Left lung (tissue), 14 donors: ENCODE measurements at regions of chr15 and their contacts with region 1.

Region 1: DNA sequence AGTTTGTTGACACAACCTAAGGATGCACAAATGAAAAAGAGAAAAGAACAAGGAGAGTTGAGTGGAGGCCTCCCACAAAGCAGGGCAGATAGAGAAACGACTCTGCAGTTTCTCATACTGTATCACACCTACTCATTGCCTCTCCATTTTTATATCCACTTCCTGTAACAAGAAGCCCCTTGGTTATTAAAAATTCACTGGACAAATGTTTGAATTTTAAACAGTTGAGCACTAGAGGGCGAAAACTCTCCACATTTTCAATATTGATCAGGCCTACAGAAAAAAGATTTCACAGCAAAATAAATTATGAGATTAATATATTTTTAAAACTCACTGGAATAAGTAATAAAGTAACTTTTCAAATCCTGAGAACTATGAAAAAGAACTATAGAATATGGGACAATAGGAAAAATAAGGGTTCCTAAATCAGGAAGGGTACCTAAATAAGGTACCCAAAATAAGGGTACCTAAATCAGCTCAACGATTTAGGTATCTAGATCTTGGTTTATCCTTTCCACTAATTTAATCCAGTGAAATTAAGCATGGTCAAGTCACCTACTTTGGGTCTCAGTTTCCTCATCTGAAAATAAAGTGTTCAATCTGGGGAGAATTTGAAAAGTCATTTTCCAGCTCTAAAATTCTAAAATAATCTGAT is 47.0 kb upstream of the PPIB start:
- DNase-seq: peak in 2 of 4 donors; percentile 20 to 49
- ATAC-seq: peak; percentile 49
- H3K4me3 ChIP-seq: no peak overlapping the region
- H3K27ac ChIP-seq: no peak overlapping the region
- H3K4me1 ChIP-seq: no peaks in the 10 kb centered on the region
- H3K27me3 ChIP-seq: no peaks in the 10 kb centered on the region
- CTCF ChIP-seq: no peak

Region 2: GRCh38 chr15:64274341-64274950 is 64.6 kb after region 1 on chr15:
- intact Hi-C with region 1: no loop called
- DNase-seq: no peak
- ATAC-seq: no peak
- H3K4me3 ChIP-seq: no peak overlapping the region
- H3K27ac ChIP-seq: peak overlapping the region in 1 of 2 donors; percentile 48
- H3K4me1 ChIP-seq: peaks cover 0 to 9% of the 10 kb centered on the region in 2 donors
- H3K27me3 ChIP-seq: no peaks in the 10 kb centered on the region
- CTCF ChIP-seq: no peak

Region 3: GRCh38 chr15:64324165-64324877 is 114.5 kb after region 1 on chr15:
- intact Hi-C with region 1: no loop called
- DNase-seq: no peak
- ATAC-seq: no peak
- H3K4me3 ChIP-seq: no peak overlapping the region
- H3K27ac ChIP-seq: no peak overlapping the region
- H3K4me1 ChIP-seq: no peaks in the 10 kb centered on the region
- H3K27me3 ChIP-seq: no peaks in the 10 kb centered on the region
- CTCF ChIP-seq: no peak

Region 4: GRCh38 chr15:64355944-64356709 is 146.3 kb after region 1 on chr15 and contains the start of gene CSNK1G1:
- intact Hi-C with region 1: loop called in 1 of 2 experiments (anchors 5 kb)
- DNase-seq: peak; percentile 96 to 99 (median 98)
- ATAC-seq: peak; percentile 99
- H3K4me3 ChIP-seq: peak within 1 kb of the TSS; percentile 82 to 83
- H3K27ac ChIP-seq: peak within 1 kb of the TSS; percentile 36 to 77
- H3K4me1 ChIP-seq: peaks cover 4 to 28% of the 10 kb centered on the region in 2 donors
- H3K27me3 ChIP-seq: no peaks in the 10 kb centered on the region
- CTCF ChIP-seq: peak in 1 of 2 donors; percentile 21
- polyA plus RNA-seq, gene CSNK1G1: 17.7 to 23.1 (median 19.6) TPM